ENCODE measurements at regions of chr4 and their contacts with region 1.

Region 1: DNA sequence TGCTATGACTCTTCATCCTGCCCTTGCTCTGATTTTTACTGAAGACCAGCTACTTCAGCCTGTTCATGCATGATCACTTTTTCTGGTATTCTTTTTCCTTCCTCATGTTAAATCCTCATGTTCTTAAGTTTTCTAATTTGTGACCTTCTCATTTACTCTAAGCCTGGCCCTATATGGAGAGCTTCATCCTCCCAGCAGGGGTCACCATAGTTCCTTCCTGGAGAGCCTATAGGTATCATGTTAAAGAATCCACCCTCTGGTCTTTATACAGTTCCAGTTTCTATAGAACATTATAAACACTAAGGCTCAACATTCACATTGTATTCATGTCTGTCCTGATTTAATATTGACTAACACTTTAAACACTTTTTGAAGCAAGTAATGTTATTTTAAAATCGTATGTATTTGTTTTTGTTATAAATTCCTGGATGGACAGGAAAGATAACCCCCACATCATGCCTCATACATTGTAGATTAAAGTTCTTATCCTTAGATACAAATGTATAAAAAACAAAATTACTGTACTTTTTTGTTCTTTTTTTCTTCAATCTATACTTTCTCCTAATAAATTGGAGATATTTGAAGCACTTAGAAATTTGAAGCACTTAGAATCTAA is 53.8 kb upstream of the OTUD4 start:
- DNase-seq: peak in 1 of 2 donors; percentile 34
- ATAC-seq: peak in 7 of 8 donors; percentile 64 to 81 (median 72)
- H3K4me3 ChIP-seq: no peak overlapping the region
- H3K27ac ChIP-seq: no peak overlapping the region
- H3K4me1 ChIP-seq: no peaks in the 10 kb centered on the region
- H3K27me3 ChIP-seq: no peaks in the 10 kb centered on the region
- CTCF ChIP-seq: peak; percentile 63 to 88 (median 81)

Region 2: DNA sequence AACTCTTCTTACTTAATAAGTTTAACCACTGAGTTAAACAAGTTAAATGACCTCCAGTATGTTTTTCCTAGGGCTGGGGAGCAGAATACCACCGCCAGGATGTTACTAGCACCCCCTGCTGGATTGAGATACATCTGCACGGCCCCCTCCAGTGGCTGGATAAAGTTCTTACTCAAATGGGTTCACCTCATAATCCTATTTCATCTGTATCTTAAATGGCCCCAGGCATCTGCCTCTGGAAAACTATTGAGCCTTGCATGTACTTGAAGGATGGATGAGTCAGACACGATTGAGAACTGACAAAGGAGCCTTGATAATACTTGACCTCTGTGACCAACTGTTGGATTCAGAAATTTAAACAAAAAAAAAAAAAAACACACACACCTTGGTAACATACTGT is 323.5 kb after region 1 on chr4:
- intact Hi-C with region 1: loop called (anchors 1 to 10 kb)
- DNase-seq: peak; percentile 18 to 66
- ATAC-seq: peak; percentile 78 to 92 (median 84)
- H3K4me3 ChIP-seq: no peak overlapping the region
- H3K27ac ChIP-seq: no peak overlapping the region
- H3K4me1 ChIP-seq: peaks cover 0 to 3% (median 0%) of the 10 kb centered on the region in 9 donors
- H3K27me3 ChIP-seq: no peaks in the 10 kb centered on the region
- CTCF ChIP-seq: peak; percentile 72 to 95 (median 87)

Region 3: GRCh38 chr4:145565328-145565727 is 331.1 kb after region 1 on chr4:
- intact Hi-C with region 1: loop called in 2 of 10 experiments (anchors 10 kb)
- DNase-seq: no peak
- ATAC-seq: no peak
- H3K4me3 ChIP-seq: no peak overlapping the region
- H3K27ac ChIP-seq: no peak overlapping the region
- H3K4me1 ChIP-seq: no peaks in the 10 kb centered on the region
- H3K27me3 ChIP-seq: no peaks in the 10 kb centered on the region
- CTCF ChIP-seq: no peak

Region 4: DNA sequence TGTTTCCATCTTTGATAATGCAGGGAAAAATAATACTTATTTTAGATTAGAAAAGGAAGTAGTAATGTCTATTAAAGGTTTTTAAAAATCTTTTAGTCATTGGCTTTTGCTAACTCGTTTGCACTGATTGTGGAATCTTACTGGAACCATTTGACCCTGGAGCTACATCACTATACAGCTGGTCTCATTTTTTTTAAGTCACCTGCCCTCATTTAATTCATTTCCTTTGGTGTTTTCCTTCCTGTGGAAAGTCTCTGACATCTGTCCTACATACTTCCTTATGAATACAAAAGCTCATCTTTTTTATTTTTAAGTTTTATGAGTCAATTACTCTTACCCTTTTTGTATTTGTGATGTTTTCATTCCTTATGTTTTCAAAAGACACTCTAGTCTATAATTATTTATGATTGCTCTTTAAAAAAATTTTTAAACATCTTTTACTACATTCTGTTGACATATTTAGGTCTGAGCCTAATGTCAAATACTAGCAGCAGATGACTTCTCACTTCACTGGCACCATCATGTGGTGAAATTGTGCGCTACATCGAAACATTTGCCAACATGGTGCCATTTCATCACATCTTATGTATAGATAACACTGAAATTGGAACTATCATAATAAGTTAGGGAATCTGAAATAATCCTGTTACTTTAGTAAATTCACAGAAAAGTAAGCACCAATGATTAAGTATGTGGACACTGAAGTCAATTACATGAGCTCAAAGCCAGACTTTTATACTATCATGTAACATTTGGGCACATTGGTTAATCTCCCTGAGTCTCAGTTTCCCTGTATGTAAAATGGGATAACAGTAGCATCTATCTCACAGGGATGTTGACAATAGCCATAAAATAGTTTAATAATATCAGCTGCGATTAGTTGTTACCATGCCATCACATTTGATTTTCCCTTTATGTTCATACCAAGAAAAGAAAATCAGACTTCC is 375.6 kb after region 1 on chr4:
- intact Hi-C with region 1: loop called (anchors 1 to 5 kb)
- DNase-seq: peak in 1 of 2 donors; percentile 47
- ATAC-seq: peak in 5 of 8 donors; percentile 37 to 61 (median 55)
- H3K4me3 ChIP-seq: no peak overlapping the region
- H3K27ac ChIP-seq: peak overlapping the region in 1 of 10 donors; percentile 23
- H3K4me1 ChIP-seq: peaks cover 0 to 8% (median 0%) of the 10 kb centered on the region in 9 donors
- H3K27me3 ChIP-seq: no peaks in the 10 kb centered on the region
- CTCF ChIP-seq: peak; percentile 60 to 87 (median 74)

Region 5: GRCh38 chr4:145663194-145663593 is 429.0 kb after region 1 on chr4:
- intact Hi-C with region 1: no loop called
- DNase-seq: peak in 1 of 2 donors; percentile 4
- ATAC-seq: peak in 7 of 8 donors; percentile 72 to 96 (median 88)
- H3K4me3 ChIP-seq: no peak overlapping the region
- H3K27ac ChIP-seq: peak overlapping the region in 4 of 10 donors; percentile 4 to 56 (median 31)
- H3K4me1 ChIP-seq: no peaks in the 10 kb centered on the region
- H3K27me3 ChIP-seq: no peaks in the 10 kb centered on the region
- CTCF ChIP-seq: no peak